GM18951 (cell line): ENCODE measurements at regions of chr4 and their contacts with region 1.

Region 1: DNA sequence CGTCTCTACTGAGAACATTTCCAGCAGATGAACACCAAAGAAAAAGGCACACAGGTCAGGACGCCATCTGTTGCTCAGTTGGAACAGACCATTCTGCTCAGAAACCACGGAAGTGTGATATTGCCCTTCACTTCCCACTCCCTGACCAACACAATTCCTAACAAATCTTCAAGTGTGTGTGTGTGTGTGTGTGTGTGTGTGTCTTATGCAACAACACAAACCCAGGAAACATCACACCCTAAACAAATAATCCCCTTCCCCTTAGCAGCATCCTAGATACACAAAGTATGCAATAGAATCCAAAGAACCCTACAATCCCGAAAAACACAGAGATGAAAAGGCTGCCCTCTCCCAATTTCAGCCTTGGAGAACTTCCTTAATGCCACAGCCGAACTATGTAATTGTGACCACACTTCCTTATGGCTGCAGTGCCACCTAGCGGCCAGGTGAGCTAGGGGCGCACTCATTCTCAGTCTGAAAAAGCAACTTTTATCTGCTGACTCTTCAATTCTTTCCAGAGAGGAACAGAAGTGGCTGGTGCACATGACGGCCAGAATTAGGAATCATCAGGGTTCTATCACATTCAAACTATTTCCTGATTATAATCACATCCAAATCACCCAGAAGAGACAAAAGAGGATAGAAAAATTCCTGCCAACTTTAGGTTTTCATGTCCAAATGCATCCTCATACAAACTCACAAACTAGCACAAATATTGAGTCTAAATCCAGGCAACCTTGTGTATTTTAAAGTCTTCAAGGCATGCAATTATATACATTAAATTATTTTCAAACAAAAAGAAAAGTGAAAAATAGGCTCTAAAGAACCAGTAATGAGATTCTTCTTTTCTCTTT is 164.9 kb downstream of the DHX15 start:
- POLR2A ChIP-seq: no peak

Region 2: DNA sequence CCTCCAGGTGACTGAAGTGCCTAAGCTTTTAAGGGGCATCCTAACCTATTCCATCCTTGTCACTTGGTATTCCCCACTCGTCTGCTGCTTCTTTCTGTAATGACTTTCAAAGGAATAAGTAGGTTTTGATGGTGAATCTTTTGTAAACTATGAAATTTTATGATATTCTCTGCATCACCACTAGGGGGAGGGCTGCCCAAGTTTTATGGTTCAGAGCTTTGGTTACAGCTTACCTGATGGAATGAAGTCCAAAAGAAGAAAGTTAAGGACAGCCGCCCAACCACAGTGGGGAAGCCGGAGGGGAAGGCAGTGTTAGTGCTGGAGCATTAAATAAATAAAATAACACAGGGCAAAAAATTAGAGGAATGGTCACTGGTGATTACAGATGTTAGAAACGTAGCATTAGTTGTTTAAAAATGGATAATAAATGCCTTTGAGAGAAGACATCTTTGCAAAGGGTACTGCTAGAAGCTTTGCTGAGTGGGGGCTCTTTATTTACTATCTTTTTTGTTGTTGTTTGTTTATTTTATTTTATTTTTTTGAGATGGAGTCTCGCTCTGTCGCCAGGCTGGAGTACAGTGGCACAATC is 1521.8 kb before region 1 on chr4:
- in situ Hi-C with region 1: loop called (anchors 25 kb)
- POLR2A ChIP-seq: no peak

Region 3: DNA sequence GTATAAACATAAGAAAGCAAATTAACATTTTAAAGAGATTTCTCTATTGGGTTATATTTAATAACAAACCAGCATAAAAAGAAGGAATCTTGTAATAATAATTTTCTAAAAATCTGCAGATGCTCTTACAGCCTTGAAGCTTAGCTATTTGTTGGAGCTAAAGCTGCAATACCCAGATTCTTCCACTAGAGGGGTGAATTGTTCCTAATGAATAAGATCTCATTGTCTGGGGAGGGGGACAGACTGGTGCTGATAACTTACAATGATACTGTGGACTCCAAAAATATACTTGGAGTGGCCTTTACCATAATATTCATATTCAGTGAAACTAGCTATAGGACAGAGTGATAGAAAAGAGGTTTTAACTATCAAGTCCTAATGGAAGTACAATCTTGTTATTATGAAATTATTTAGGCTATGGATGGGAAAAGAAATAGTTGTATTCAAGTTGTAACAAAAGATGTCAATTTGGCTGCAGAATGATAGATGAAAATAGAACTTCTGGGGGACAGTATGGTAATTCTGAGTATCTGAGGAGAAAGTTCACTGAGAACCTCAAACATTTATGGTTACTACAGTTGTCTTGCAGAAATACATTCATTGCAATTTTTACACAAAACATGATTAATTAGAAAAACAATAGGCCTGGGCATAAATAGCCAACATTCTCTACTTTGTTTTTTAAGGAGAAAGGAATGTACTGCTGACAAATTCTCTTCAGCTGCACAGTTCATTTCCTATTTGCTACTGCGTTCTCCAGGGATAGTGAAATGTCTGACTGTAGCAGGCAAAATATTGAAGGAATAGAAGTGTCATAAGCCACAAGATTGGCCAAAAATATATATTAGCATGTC is 1283.4 kb before region 1 on chr4:
- in situ Hi-C with region 1: loop called (anchors 25 kb)
- POLR2A ChIP-seq: no peak

Region 4: GRCh38 chr4:24179201-24179840 is 240.1 kb before region 1 on chr4:
- in situ Hi-C with region 1: no loop called
- POLR2A ChIP-seq: no peak